AG04449 (cell line): ENCODE measurements at regions of chr19 and their contacts with region 1.

Region 1: DNA sequence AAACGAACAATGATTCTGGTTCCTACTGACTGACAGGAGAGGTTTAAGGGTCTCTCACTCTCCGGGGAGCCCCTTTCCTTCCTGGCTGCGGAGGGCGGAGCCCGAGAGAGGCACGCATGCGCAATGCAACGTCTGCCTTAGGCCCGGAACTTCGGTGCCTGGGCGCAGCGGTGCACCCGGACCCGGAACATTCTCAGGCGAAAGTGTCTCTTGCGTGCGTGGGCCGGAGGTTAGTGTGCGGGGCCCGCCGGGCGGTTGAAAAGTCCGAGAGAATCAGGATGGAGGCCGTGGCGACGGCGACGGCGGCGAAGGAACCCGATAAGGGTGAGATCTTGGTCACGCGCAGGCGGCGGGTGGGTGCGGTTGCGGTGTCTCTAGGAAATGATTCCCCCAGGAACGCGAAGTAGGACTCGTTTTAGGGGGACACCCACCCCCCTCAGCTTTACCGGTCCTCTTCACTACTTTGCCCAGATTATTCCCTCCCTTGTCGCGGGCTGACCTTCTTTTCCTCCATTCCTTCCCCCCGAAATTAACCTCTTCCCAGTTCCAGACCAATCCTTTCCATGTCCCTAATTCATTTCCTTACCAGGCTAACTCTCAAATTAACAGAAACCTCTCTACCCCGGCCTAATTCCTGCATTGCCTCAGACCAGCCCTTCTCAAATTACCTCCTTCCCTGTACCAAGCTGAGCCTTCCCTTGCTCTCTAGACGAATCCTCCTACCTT is at the start of gene CCDC97:
- DNase-seq: no peak
- H3K4me3 ChIP-seq: peak within 1 kb of the TSS; percentile 92
- CTCF ChIP-seq: no peak

Region 2: GRCh38 chr19:41206926-41207750 is 103.1 kb before region 1 on chr19:
- CTCF ChIA-PET with region 1: interaction called, 125 read pairs
- POLR2A ChIA-PET with region 1: interaction called, 4 read pairs
- DNase-seq: no peak
- H3K4me3 ChIP-seq: no peak overlapping the region
- CTCF ChIP-seq: no peak

Region 3: DNA sequence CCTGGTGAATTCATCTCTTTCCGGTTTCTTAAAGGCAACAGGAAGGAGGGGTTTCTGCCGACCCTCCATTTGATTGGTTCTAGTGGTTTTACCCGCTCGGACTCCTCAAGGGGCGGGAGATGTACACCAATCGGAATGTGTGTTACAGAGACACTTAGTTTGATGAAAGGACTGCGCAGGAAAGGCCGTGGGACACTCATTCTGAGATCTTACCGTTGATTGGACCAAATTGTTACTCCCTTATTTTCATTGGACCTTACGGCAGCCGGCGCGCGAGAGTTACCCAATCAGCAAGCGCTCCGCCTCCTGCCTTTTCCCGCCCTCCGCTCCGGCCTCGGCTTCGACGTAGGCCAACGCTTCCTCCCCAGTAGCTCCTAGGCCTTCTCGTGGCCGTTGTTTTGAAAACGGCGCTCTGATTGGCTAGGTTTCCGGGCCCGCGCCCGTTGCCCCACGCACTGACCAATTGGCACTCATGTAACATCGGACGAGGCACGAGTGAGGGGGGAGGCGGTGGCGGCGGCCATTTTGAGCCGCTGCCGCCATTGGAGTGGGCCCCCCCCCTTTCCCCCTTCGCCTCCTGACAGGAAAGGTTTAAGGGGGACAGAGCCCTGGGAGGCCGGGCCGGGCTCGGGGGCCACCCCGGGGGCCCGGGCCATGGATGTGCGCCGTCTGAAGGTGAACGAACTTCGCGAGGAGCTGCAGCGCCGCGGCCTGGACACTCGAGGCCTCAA is 46.2 kb before region 1 on chr19 and contains the start of gene HNRNPUL1:
- CTCF ChIA-PET with region 1: interaction called, 17 read pairs
- POLR2A ChIA-PET with region 1: interaction called, 4 read pairs
- DNase-seq: peak; percentile 100
- H3K4me3 ChIP-seq: peak within 1 kb of the TSS; percentile 87
- CTCF ChIP-seq: peak; percentile 36

Region 4: GRCh38 chr19:41288673-41289505 is 21.3 kb before region 1 on chr19:
- CTCF ChIA-PET with region 1: interaction called, 164 read pairs
- POLR2A ChIA-PET with region 1: interaction called, 3 read pairs
- DNase-seq: no peak
- H3K4me3 ChIP-seq: no peak overlapping the region
- CTCF ChIP-seq: no peak

Region 5: GRCh38 chr19:41321600-41322270 is 11.5 kb after region 1 on chr19:
- CTCF ChIA-PET with region 1: interaction called, 53 read pairs
- POLR2A ChIA-PET with region 1: interaction called, 9 read pairs
- DNase-seq: no peak
- H3K4me3 ChIP-seq: no peak overlapping the region
- CTCF ChIP-seq: peak; percentile 72